ENCODE measurements at regions of chr2 and their contacts with region 1.

Region 1: GRCh38 chr2:219388127-219388844 is 574 bp upstream of the DNPEP start:
- DNase-seq: peak; percentile 98
- H3K4me3 Mint-ChIP-seq: peak overlapping the region; percentile 90
- H3K27ac Mint-ChIP-seq: peak overlapping the region; percentile 59
- H3K4me1 Mint-ChIP-seq: peaks cover 23% of the 10 kb centered on the region
- H3K27me3 Mint-ChIP-seq: no peaks in the 10 kb centered on the region

Region 2: GRCh38 chr2:218406209-218406948 is 981.9 kb before region 1 on chr2:
- CTCF ChIA-PET with region 1: no interaction called
- intact Hi-C with region 1: loop called (anchors 1 kb)
- DNase-seq: peak; percentile 96
- H3K4me3 Mint-ChIP-seq: peak overlapping the region; percentile 82
- H3K27ac Mint-ChIP-seq: peak overlapping the region; percentile 75
- H3K4me1 Mint-ChIP-seq: peaks cover 34% of the 10 kb centered on the region
- H3K27me3 Mint-ChIP-seq: peaks cover 2% of the 10 kb centered on the region

Region 3: GRCh38 chr2:218892693-218893348 is 495.5 kb before region 1 on chr2:
- CTCF ChIA-PET with region 1: no interaction called
- intact Hi-C with region 1: loop called (anchors 1 kb)
- DNase-seq: peak; percentile 90
- H3K4me3 Mint-ChIP-seq: peak overlapping the region; percentile 75
- H3K27ac Mint-ChIP-seq: peak overlapping the region; percentile 76
- H3K4me1 Mint-ChIP-seq: peaks cover 45% of the 10 kb centered on the region
- H3K27me3 Mint-ChIP-seq: no peaks in the 10 kb centered on the region

Region 4: GRCh38 chr2:219206442-219207253 is 181.6 kb before region 1 on chr2 and contains the start of gene ZFAND2B:
- CTCF ChIA-PET with region 1: no interaction called
- intact Hi-C with region 1: loop called (anchors 2 kb)
- DNase-seq: peak; percentile 94
- H3K4me3 Mint-ChIP-seq: peak within 1 kb of the TSS; percentile 94
- H3K27ac Mint-ChIP-seq: peak within 1 kb of the TSS; percentile 96
- H3K4me1 Mint-ChIP-seq: peaks cover 32% of the 10 kb centered on the region
- H3K27me3 Mint-ChIP-seq: no peaks in the 10 kb centered on the region
- total RNA-seq, gene ZFAND2B: 32.6 to 33.6 TPM

Region 5: GRCh38 chr2:219278655-219279516 is 109.4 kb before region 1 on chr2 and contains the start of gene DNAJB2:
- CTCF ChIA-PET with region 1: no interaction called
- intact Hi-C with region 1: loop called (anchors 1 kb)
- DNase-seq: peak; percentile 99
- H3K4me3 Mint-ChIP-seq: peak within 1 kb of the TSS; percentile 92
- H3K27ac Mint-ChIP-seq: peak within 1 kb of the TSS; percentile 95
- H3K4me1 Mint-ChIP-seq: peaks cover 37% of the 10 kb centered on the region
- H3K27me3 Mint-ChIP-seq: no peaks in the 10 kb centered on the region
- total RNA-seq, gene DNAJB2: 24.6 to 24.9 TPM

Region 6: DNA sequence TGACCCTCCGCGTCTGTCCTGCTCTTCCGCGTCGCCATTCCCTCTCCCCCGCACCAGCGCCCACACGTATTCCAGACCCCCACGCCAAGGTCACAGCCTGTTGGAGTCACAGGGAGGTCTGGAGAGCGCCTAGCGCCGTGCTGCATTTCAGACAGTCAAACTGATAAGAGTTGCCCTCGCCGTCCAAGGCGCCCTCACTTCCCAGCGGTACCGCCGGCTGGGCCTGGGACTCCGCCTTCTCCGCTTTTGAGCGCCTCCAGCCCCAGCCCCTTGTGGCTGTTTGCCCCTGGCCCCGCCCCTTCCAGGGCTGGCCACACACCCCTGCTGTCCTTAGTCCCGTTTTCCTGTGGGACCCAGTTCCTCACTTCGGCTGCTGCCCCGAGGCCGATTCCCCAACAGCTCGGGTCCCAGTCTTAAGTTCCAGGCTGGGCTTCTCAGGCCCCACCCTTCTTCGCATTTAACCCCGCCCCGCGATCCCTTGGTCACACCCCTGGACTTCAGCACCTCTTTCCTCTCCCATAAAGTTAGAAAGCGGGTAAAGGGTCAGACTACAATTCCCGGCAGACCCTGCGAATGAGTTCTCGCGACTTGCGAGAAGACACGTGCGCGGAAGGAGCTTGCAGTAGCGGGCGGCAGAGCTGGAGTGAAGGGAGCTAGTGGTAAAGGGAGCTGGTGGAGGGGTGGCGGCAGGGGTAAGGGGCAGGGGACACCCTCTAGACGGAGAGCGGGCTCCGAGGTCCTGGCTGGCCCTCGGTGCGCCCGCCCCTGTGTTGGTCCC is 110.2 kb after region 1 on chr2 and contains the start of gene GMPPA:
- CTCF ChIA-PET with region 1: interaction called, 4 read pairs
- intact Hi-C with region 1: loop called (anchors 1 kb)
- DNase-seq: peak; percentile 98
- H3K4me3 Mint-ChIP-seq: peak within 1 kb of the TSS; percentile 91
- H3K27ac Mint-ChIP-seq: peak within 1 kb of the TSS; percentile 39
- H3K4me1 Mint-ChIP-seq: peaks cover 28% of the 10 kb centered on the region
- H3K27me3 Mint-ChIP-seq: peaks cover 43% of the 10 kb centered on the region
- total RNA-seq, gene GMPPA: 25.2 to 28.4 TPM

Region 7: GRCh38 chr2:219597552-219598307 is 209.4 kb after region 1 on chr2 and contains the start of gene STK11IP:
- CTCF ChIA-PET with region 1: no interaction called
- intact Hi-C with region 1: loop called (anchors 1 kb)
- DNase-seq: peak; percentile 96
- H3K4me3 Mint-ChIP-seq: peak within 1 kb of the TSS; percentile 94
- H3K27ac Mint-ChIP-seq: peak within 1 kb of the TSS; percentile 94
- H3K4me1 Mint-ChIP-seq: peaks cover 10% of the 10 kb centered on the region
- H3K27me3 Mint-ChIP-seq: no peaks in the 10 kb centered on the region
- total RNA-seq, gene STK11IP: 32.1 TPM

Measured in activated naive CD4-positive, alpha-beta T cell treated with anti-CD3 and anti-CD28 coated beads for 36 hours (primary cell).